MCF 10A (cell line): ENCODE measurements at regions of chr1 and their contacts with region 1.

Region 1: GRCh38 chr1:225004396-225004795 is 74.9 kb downstream of the DNAH14 start:
- DNase-seq: no peak
- H3K4me3 Mint-ChIP-seq: no peak overlapping the region
- H3K27ac Mint-ChIP-seq: no peak overlapping the region
- H3K4me1 Mint-ChIP-seq: no peaks in the 10 kb centered on the region
- H3K27me3 Mint-ChIP-seq: no peaks in the 10 kb centered on the region
- CTCF ChIP-seq: peak; percentile 33

Region 2: DNA sequence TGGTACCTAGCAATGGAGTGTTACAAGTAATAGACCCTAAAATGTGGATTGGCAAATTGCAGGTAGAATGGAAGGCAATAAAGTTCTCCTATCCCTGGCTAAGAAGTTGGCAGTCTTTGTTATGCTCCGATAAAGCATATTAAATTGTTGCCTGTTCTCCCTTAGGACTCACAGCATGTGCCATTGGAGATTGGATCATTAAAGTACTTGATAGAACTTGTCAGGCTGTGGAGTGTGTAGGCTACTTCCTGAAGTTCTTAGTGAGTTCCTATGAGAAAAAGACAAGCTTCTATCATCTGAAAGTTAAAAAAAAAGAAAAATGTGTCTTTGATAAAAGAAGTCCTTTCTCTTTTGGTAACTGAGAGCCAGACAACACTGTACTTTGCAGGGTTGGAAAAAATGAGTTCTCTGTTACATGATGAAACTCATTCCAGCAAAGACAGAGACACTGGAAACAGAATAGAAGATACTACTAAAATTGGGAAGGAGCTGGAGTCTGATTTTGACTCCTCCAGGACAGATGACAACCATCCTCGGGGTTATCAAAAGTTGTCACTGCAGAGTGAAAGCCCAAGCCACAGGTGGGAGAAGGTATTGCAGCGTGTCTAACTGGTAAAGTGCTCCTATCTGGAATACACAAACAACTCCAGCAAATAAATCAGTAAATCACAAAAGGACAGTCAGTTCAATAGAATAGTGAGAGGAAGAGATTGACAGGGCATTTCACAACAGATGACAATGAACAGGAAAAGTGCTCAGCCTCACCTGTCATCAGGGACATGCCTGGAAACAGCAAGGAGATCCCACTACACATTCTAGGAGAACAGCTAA is 482.3 kb before region 1 on chr1:
- CTCF ChIA-PET with region 1: interaction called, 11 read pairs
- POLR2A ChIA-PET with region 1: no interaction called
- intact Hi-C with region 1: no loop called
- DNase-seq: no peak
- H3K4me3 Mint-ChIP-seq: no peak overlapping the region
- H3K27ac Mint-ChIP-seq: no peak overlapping the region
- H3K4me1 Mint-ChIP-seq: peaks cover 8% of the 10 kb centered on the region
- H3K27me3 Mint-ChIP-seq: no peaks in the 10 kb centered on the region
- CTCF ChIP-seq: peak; percentile 7